K562 (cell line): ENCODE measurements at regions of chr6 and their contacts with region 1.

Region 1: DNA sequence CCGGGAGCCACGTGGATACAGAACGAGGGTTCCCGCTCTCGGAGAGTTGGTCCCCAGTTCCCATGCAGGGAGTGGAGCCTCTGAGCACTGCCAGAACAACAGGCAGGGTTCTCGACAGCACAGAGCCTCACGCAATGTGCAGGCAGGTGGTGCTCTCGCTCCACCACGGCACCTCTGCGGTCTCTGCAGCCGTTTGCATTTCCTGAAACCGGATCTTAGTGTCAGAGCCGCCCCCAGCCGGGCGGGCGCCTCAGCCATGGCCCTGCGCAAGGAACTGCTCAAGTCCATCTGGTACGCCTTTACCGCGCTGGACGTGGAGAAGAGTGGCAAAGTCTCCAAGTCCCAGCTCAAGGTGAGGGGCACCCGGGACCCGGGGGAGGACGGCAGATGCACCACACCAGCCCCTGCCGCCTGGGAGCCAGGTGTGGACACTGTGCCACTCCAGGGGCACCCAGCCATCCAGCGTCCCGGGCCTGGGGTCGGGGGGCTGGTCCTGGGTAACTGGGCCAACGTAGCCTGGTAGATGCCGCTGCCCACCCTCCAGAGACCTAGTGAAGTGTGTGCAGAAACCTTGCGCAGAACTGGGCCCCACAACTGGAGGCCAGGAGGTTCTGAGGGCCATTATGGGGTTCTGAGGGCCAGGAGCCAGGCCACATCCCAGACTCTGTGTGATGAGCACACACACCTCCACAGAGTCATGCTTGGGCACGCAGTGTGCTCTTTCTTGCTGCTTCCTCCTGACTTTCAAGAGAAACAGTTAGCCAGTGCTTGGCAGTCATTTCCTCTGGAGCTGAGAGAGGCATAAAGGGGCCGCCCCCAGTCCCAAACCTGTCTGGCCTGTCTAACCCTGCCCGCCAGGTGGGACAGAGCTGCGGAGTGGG is at the start of gene DEF6:
- DNase-seq: peak; percentile 94 to 97 (median 96)
- ATAC-seq: peak; percentile 96
- H3K4me3 ChIP-seq: peak within 1 kb of the TSS; percentile 65
- H3K27ac ChIP-seq: peak within 1 kb of the TSS; percentile 81
- H3K4me1 ChIP-seq: peaks cover 31 to 37% of the 10 kb centered on the region in 2 experiments
- H3K27me3 ChIP-seq: no peaks in the 10 kb centered on the region
- CTCF ChIP-seq: peak; percentile 97 to 99 (median 99)
- EP300 ChIP-seq: peak; percentile 89
- POLR2A ChIP-seq: peak; percentile 77
- RAD21 ChIP-seq: peak; percentile 100
- polyA plus RNA-seq, gene DEF6: 1.3 to 1.4 TPM

Region 2: DNA sequence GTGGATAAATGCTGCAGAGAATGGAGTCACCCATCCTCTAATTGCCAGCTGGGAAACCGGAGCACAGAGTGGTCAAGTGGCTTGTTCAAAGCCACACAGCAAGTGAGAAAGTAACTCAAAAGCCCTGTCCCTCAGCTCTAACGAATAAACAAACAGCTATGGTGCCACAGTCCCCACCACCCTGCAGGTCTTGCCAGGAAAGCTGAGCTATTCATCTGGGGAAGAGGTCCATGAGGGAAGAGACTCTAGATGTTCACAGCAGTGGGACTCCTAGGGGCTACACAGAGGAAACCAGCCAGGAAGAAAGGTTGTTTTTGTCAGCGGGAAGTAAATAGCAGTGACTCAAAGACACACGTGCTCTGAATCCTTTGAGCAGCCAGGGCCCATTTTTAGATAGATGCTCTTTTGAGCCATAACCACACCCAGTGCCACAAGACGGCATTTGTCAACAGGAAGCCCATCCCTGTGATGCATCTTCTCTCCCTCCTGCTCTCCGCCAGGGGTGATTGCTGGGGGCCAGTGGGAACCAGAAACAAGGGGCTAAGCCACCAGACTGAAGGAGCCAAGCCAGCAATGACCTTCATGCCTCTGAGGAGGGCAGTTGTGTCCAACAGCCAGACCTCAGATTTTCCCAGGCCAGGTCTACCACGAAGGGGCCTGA is 124.3 kb before region 1 on chr6:
- CTCF ChIA-PET with region 1: no interaction called
- POLR2A ChIA-PET with region 1: no interaction called
- in situ Hi-C with region 1: no loop called
- intact Hi-C with region 1: no loop called
- DNase-seq: no peak
- ATAC-seq: peak; percentile 40; the same call in 1 of the 3 replicates
- H3K4me3 ChIP-seq: no peak overlapping the region
- H3K27ac ChIP-seq: no peak overlapping the region
- H3K4me1 ChIP-seq: no peaks in the 10 kb centered on the region; a peak in 1 of 5 replicates
- H3K27me3 ChIP-seq: peaks cover 9 to 30% of the 10 kb centered on the region in 2 experiments
- CTCF ChIP-seq: no peak
- EP300 ChIP-seq: no peak
- POLR2A ChIP-seq: no peak
- RAD21 ChIP-seq: no peak

Region 3: GRCh38 chr6:35287671-35288396 is 10.0 kb before region 1 on chr6:
- CTCF ChIA-PET with region 1: no interaction called
- POLR2A ChIA-PET with region 1: interaction called, 25 read pairs
- in situ Hi-C with region 1: no loop called
- intact Hi-C with region 1: no loop called
- DNase-seq: no peak
- ATAC-seq: no peak
- H3K4me3 ChIP-seq: no peak overlapping the region
- H3K27ac ChIP-seq: no peak overlapping the region
- H3K4me1 ChIP-seq: 0 out of 5 replicates have a peak, but pooled peaks cover 0 to 3% of the 10 kb centered on the region in 2 experiments
- H3K27me3 ChIP-seq: no peaks in the 10 kb centered on the region
- CTCF ChIP-seq: no peak
- EP300 ChIP-seq: no peak
- POLR2A ChIP-seq: no peak
- RAD21 ChIP-seq: no peak

Region 4: DNA sequence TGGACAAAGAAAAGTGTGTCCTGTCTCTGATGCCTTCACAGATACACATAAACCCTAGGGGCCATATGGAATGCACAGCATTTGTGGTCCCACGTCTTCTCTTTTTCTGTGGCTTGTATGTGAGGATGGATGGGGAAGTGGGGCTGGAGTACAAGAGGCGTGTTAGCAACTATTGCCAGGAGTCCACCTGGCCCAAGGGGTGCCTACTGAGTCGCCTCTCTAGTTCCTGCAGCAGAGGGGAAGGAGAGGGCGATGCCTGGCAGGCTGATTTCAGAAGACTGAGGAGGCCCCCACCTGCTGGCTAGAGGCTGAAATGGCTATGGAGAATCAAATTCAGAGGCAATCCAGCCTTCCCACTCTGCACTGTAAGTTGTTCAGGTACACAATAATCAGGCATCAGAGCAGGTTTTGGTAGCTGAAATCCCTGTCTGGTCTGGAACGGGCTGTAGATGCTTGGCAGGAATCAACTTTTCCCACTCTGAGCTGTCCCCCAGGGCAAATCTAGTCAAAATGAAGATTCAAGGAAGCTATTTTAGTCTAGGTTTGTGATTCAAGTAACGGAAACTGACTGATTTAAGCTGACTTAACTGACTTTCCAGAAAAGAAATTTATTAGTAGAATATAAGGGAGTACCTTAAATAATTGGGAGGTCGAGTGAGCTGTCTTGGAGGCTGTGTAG is 29.6 kb after region 1 on chr6:
- CTCF ChIA-PET with region 1: interaction called, 16 read pairs
- POLR2A ChIA-PET with region 1: no interaction called
- in situ Hi-C with region 1: no loop called
- intact Hi-C with region 1: loop called (anchors 1 kb)
- DNase-seq: peak; percentile 56 to 73 (median 63)
- ATAC-seq: peak; percentile 97
- H3K4me3 ChIP-seq: no peak overlapping the region
- H3K27ac ChIP-seq: no peak overlapping the region
- H3K4me1 ChIP-seq: peaks cover 0 to 3% of the 10 kb centered on the region in 2 experiments; a peak in 1 of 5 replicates
- H3K27me3 ChIP-seq: peaks cover 2 to 7% of the 10 kb centered on the region in 2 experiments; a peak in 3 of 5 replicates
- CTCF ChIP-seq: peak; percentile 76 to 84 (median 78)
- EP300 ChIP-seq: no peak
- POLR2A ChIP-seq: no peak
- RAD21 ChIP-seq: peak; percentile 60 to 79

Region 5: DNA sequence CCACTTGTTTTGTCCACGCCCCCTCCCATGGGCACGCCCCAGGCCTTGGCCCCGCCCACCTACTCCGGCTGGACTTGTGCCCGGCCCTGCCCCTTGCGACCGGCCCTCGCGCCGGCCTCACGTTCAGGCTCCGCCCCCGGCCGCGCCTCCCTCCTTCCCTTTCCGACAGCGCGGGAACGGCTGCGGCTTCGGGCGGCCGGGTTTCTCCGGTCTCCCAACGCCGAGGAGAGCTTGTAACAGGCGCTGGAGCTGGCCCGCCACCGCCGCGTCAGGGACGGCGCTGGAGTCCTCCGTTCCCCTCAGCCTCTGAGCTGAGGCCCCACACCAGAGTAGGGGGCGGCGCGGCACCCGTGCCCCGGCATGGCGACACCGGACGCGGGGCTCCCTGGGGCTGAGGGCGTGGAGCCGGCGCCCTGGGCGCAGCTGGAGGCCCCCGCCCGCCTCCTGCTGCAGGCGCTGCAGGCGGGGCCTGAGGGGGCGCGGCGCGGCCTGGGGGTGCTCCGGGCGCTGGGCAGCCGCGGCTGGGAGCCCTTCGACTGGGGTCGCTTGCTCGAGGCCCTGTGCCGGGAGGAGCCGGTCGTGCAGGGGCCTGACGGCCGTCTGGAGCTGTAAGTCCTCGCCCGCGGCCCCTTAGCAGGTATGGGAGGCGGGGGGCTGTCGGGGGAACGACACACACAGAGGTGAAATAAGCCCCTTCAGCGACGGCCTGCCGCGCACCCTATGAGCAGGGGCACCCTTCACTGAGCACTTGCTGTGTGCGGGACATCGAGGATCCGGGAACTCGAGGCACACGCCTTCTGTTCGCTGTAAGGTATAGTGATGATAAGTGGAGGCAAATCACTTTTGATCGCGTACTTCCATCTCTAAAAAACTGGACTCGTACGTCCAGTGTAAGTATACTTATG is 154.6 kb after region 1 on chr6 and contains the start of gene FANCE:
- CTCF ChIA-PET with region 1: interaction called, 33 read pairs
- POLR2A ChIA-PET with region 1: interaction called, 5 read pairs
- in situ Hi-C with region 1: loop called (anchors 10 kb)
- intact Hi-C with region 1: loop called (anchors 1 kb)
- DNase-seq: peak; percentile 98 to 99 (median 99)
- ATAC-seq: peak; percentile 94
- H3K4me3 ChIP-seq: peak within 1 kb of the TSS; percentile 73
- H3K27ac ChIP-seq: peak within 1 kb of the TSS; percentile 78
- H3K4me1 ChIP-seq: peaks cover 18 to 27% of the 10 kb centered on the region in 2 experiments
- H3K27me3 ChIP-seq: peaks cover 1 to 5% of the 10 kb centered on the region in 2 experiments; a peak in 1 of 5 replicates
- CTCF ChIP-seq: no peak; a peak in 1 of 6 replicates
- EP300 ChIP-seq: no peak
- POLR2A ChIP-seq: peak; percentile 92
- RAD21 ChIP-seq: no peak
- polyA plus RNA-seq, gene FANCE: 5.7 to 5.9 TPM

Region 6: DNA sequence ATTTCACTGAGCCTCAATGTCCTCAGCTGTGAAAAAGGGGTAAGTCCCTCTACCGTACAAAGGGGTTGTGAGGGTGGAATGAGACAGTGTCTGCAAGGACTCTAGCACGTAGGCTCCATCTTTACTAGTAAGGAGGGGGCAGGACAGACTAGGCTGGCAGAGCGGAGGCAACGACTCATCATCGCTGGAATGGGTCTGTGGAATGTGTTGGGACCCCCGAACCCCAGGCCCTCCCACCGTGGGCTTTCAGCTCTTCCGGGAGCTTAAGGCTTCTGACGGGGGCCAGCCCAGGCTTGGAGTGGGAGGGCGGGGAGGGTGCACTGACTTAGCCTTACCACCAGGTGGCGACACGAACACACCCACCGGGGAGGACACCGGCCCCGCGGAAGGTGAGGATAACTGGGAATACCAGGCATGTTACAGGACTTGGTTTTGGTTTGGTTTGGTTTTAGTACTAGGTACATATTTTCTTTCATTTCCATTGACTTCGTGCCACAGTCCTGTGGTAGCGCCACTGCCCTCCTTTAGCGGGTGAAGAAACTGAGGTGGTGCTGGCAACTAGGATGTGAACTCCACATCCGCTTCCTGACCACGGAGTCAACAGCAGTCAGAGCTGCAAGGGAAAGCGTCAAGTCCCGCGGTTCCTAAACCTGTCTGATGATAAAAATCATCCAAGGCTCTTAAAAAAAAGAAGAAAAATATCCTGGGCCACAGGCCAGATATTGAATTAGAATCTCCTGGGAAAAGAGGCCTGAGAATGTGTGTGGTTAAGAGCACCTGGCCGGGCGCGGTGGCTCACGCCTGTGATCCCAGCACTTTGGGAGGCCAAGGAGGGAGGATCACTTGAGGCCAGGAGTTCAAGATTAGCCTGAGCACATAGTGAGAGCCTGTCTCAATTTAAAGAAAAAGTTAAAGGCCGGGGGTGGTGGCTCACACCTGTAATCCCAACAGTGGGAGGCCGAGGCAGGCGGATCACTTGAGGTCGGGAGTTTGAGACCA is 225.1 kb after region 1 on chr6:
- CTCF ChIA-PET with region 1: interaction called, 6 read pairs
- POLR2A ChIA-PET with region 1: interaction called, 6 read pairs
- in situ Hi-C with region 1: no loop called
- intact Hi-C with region 1: loop called (anchors 5 kb)
- DNase-seq: peak; percentile 82 to 96 (median 92)
- ATAC-seq: peak; percentile 92
- H3K4me3 ChIP-seq: no peak overlapping the region
- H3K27ac ChIP-seq: no peak overlapping the region
- H3K4me1 ChIP-seq: peaks cover 0 to 3% of the 10 kb centered on the region in 2 experiments; a peak in 2 of 5 replicates
- H3K27me3 ChIP-seq: peaks cover 21 to 46% of the 10 kb centered on the region in 2 experiments
- CTCF ChIP-seq: peak; percentile 94 to 98 (median 94)
- EP300 ChIP-seq: no peak
- POLR2A ChIP-seq: no peak
- RAD21 ChIP-seq: peak; percentile 83 to 96

Region 7: GRCh38 chr6:35533981-35534380 is 236.1 kb after region 1 on chr6:
- CTCF ChIA-PET with region 1: no interaction called
- POLR2A ChIA-PET with region 1: no interaction called
- in situ Hi-C with region 1: no loop called
- intact Hi-C with region 1: no loop called
- DNase-seq: no peak
- ATAC-seq: no peak
- H3K4me3 ChIP-seq: no peak overlapping the region
- H3K27ac ChIP-seq: no peak overlapping the region
- H3K4me1 ChIP-seq: no peaks in the 10 kb centered on the region
- H3K27me3 ChIP-seq: peaks cover 31 to 55% of the 10 kb centered on the region in 2 experiments; a peak in 4 of 5 replicates
- CTCF ChIP-seq: no peak
- EP300 ChIP-seq: no peak
- POLR2A ChIP-seq: no peak
- RAD21 ChIP-seq: no peak

Region 8: DNA sequence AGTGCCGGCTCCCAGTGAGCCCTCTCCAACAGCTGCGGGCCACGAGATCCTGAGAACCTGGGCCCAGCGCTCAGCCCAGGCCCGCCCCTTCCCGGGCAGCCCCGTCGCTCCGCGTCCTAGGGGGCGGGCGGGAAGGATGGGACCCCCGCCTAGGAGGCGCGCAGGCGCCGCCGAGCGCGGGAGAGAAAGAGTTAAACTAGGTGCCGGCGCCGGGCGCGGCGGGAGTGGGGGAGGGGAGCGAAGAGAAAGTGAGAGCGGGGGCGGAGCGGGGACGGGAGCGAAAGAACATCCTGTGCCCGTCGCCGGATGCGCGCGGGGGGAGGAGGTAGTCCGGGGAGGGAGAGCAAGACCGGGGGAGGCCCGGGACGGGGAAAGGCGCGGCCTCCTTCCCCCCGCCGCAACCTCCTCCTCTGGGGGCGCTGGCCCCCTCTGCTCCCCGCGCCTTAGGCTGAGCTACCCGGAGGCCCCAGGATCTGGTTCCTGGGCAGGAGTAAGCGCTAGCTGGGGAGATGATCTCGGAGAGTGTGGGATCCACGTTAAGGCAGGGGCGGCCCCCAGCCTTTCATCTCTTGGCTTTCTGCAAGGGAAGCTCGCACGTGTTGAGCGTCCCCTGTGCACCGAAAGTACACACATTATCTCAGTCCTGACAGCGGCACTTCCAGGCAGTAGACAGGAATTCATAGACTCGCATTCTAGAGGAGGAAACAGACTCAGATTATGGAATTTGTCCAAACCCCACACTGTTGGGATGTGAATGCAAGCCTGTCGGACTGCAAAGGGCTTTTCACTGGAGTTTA is 434.1 kb after region 1 on chr6:
- CTCF ChIA-PET with region 1: interaction called, 9 read pairs
- POLR2A ChIA-PET with region 1: no interaction called
- in situ Hi-C with region 1: loop called (anchors 5 kb)
- intact Hi-C with region 1: loop called (anchors 2 kb)
- DNase-seq: peak; percentile 97 to 98 (median 98)
- ATAC-seq: peak; percentile 75
- H3K4me3 ChIP-seq: peak overlapping the region; percentile 77
- H3K27ac ChIP-seq: peak overlapping the region; percentile 85
- H3K4me1 ChIP-seq: peaks cover 46 to 63% of the 10 kb centered on the region in 2 experiments
- H3K27me3 ChIP-seq: no peaks in the 10 kb centered on the region
- CTCF ChIP-seq: peak; percentile 30 to 50 (median 42)
- EP300 ChIP-seq: peak; percentile 65; the same call in 1 of the 2 replicates
- POLR2A ChIP-seq: peak; percentile 89
- RAD21 ChIP-seq: peak; percentile 12 to 30; a peak in 1 of 4 replicates